ENCODE measurements at regions of chr15 and their contacts with region 1.

Region 1: DNA sequence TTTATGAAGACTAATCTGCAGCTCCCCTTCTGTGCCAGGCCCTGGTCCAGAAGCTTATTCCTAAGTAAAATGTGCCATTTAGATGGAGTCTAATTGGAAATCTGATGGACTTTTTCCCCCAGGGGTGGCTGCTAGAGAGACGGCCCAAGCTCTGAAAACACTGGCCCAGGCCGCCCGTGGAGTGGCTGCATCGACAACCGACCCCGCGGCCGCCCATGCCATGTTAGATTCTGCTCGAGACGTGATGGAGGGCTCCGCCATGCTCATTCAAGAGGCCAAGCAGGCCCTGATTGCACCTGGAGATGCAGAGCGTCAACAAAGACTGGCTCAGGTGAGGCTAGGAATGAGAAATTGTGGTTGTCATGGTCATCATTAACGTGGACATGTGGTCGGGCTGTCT is 305.8 kb upstream of the TPM1 start:
- DNase-seq: no peak
- ATAC-seq: no peak
- H3K4me3 ChIP-seq: no peak overlapping the region
- H3K27ac ChIP-seq: no peak overlapping the region
- H3K4me1 ChIP-seq: no peaks in the 10 kb centered on the region
- H3K27me3 ChIP-seq: no peaks in the 10 kb centered on the region
- CTCF ChIP-seq: no peak

Region 2: GRCh38 chr15:62606376-62607113 is 130.2 kb before region 1 on chr15:
- CTCF ChIA-PET with region 1: no interaction called
- POLR2A ChIA-PET with region 1: interaction called, 11 read pairs
- in situ Hi-C with region 1: no loop called
- intact Hi-C with region 1: no loop called
- DNase-seq: no peak
- ATAC-seq: peak; percentile 88
- H3K4me3 ChIP-seq: no peak overlapping the region
- H3K27ac ChIP-seq: no peak overlapping the region
- H3K4me1 ChIP-seq: peaks cover 4% of the 10 kb centered on the region; the same call in 1 of the 2 replicates
- H3K27me3 ChIP-seq: no peaks in the 10 kb centered on the region
- CTCF ChIP-seq: no peak

Region 3: DNA sequence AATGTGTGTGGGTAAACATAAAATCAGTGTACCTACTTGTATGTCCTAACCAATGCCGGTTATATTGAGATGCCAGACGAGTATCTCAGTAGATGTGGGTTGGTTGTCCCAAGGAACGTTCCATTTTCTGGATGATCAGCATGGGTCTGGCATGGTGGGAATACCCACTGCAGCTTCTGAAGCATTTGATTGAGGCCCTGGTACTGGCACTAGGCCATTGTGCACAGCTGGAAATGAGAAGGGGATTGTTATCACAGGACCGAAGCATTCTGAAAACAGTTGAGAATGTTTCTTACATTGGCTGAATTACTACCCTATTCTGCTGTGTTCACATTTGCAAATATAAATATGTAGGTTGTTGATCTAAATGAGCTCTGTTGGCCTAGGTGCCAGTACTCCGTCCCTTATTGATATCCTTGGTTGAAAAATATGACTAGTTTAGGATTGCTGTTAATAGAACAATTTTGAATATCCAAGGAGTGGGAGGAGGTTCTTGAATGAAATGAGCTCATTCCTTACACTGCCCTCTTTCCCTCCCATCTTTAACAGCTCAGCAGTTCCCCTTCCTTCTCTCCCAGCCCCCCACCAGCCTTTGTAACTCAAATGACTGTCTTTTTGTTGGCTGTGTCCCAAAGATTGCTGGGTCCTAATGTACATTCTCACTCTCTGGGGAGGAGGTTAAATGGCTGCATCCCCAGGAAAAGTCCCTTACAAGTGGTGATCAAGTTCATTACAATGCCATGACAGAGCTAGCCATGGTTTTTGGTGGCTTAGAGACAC is 12.5 kb after region 1 on chr15:
- CTCF ChIA-PET with region 1: no interaction called
- POLR2A ChIA-PET with region 1: no interaction called
- in situ Hi-C with region 1: no loop called
- intact Hi-C with region 1: no loop called
- DNase-seq: no peak
- ATAC-seq: no peak
- H3K4me3 ChIP-seq: no peak overlapping the region
- H3K27ac ChIP-seq: no peak overlapping the region
- H3K4me1 ChIP-seq: no peaks in the 10 kb centered on the region
- H3K27me3 ChIP-seq: no peaks in the 10 kb centered on the region
- CTCF ChIP-seq: no peak

Region 4: GRCh38 chr15:62816342-62817069 is 79.8 kb after region 1 on chr15:
- CTCF ChIA-PET with region 1: no interaction called
- POLR2A ChIA-PET with region 1: no interaction called
- in situ Hi-C with region 1: no loop called
- intact Hi-C with region 1: no loop called
- DNase-seq: no peak
- ATAC-seq: no peak
- H3K4me3 ChIP-seq: no peak overlapping the region
- H3K27ac ChIP-seq: no peak overlapping the region
- H3K4me1 ChIP-seq: peaks cover 4% of the 10 kb centered on the region; the same call in 1 of the 2 replicates
- H3K27me3 ChIP-seq: no peaks in the 10 kb centered on the region
- CTCF ChIP-seq: no peak

Region 5: GRCh38 chr15:62841269-62841628 is 104.5 kb after region 1 on chr15:
- CTCF ChIA-PET with region 1: no interaction called
- POLR2A ChIA-PET with region 1: no interaction called
- in situ Hi-C with region 1: no loop called
- intact Hi-C with region 1: no loop called
- DNase-seq: no peak
- ATAC-seq: no peak
- H3K4me3 ChIP-seq: no peak overlapping the region
- H3K27ac ChIP-seq: no peak overlapping the region
- H3K4me1 ChIP-seq: peaks cover 17% of the 10 kb centered on the region
- H3K27me3 ChIP-seq: no peaks in the 10 kb centered on the region
- CTCF ChIP-seq: no peak

Region 6: DNA sequence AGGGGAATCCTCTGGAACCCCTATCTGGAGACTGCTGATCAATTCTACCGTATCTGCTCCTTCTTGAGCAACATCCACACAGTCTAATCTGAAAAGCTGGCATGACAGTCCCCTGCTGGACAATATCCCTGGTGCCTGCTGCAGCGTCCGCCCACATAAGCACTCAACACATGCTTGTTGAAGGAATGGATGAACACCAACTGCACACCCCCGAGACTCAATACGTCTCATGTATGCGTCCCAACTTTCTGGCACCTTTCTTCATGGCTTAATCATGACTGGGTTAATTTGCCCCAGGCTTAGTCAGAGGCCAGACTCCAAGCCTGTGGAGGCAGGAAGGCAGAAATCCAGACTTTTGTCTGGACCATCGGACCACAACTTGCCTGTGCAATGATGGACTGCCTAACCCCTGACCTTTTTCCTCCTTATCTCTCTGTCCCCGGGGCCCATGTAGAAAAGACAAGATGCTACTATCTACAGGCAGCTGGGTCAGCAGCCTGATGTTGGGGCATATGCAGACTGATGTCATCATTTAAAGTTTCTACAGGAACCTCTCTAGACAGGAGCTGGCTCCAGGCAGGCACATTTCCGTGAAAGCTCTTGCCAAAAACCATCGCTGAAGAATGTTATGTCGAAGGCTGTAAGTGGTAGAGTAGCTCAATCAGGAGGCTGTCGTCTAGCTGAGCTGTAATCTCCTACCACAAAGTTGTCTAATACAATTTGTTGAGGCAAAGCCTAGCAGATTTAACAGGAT is 191.7 kb after region 1 on chr15:
- CTCF ChIA-PET with region 1: no interaction called
- POLR2A ChIA-PET with region 1: no interaction called
- in situ Hi-C with region 1: no loop called
- intact Hi-C with region 1: no loop called
- DNase-seq: no peak
- ATAC-seq: peak; percentile 77
- H3K4me3 ChIP-seq: no peak overlapping the region
- H3K27ac ChIP-seq: peak overlapping the region; percentile 59; the same call in 1 of the 2 replicates
- H3K4me1 ChIP-seq: peaks cover 11% of the 10 kb centered on the region
- H3K27me3 ChIP-seq: no peaks in the 10 kb centered on the region
- CTCF ChIP-seq: peak; percentile 46

Measured in Panc1 (cell line).